WTC11 (cell line): ENCODE measurements at regions of chr17 and their contacts with region 1.

Region 1: DNA sequence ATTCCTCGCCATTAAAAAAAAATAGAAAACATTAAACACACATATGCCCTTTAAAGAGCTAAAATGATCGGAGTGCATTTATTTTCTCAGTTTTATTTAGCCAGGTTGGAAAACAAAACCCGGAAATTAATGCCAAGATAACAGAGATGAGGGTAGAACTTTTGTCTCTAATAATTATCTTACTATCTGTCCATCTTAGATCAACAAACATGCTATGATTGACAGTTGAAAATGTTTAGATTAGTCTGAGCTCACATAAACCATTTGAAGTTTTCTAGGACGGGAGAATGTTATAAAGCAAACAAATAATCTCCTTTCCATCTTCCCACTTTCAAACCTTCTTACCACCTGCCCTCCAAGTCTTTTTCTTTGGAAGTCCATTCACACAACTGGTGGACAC is 333.4 kb upstream of the SOX9 start:
- DNase-seq: no peak
- ATAC-seq: no peak
- H3K4me3 Mint-ChIP-seq: no peak overlapping the region
- H3K27ac Mint-ChIP-seq: no peak overlapping the region
- H3K4me1 Mint-ChIP-seq: no peaks in the 10 kb centered on the region
- H3K27me3 Mint-ChIP-seq: no peaks in the 10 kb centered on the region
- CTCF ChIP-seq: no peak

Region 2: DNA sequence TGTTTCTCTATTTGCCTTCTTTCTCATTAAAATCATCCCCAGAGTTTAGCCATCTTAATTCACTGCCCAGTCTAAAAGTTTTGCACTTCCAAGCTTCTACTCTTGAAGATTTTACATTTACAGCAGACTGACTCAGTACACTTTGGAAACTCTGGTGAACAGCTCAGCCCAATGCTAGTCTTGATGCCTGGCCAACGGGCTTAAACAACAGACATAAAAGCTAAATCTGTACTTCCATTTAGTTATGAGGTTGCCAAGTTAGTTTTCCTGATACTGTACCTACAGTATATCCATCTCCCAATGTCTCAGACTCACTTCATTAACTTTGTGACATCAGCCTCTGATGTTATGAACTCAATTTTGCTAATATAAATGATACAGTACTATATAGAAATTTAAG is 558.4 kb before region 1 on chr17:
- CTCF ChIA-PET with region 1: no interaction called
- POLR2A ChIA-PET with region 1: interaction called, 10 read pairs
- DNase-seq: no peak
- ATAC-seq: no peak
- H3K4me3 Mint-ChIP-seq: no peak overlapping the region
- H3K27ac Mint-ChIP-seq: no peak overlapping the region
- H3K4me1 Mint-ChIP-seq: no peaks in the 10 kb centered on the region
- H3K27me3 Mint-ChIP-seq: no peaks in the 10 kb centered on the region
- CTCF ChIP-seq: no peak